Activated CD8-positive, alpha-beta T cell treated with anti-CD3 and anti-CD28 coated beads for 36 hours (primary cell): ENCODE measurements at regions of chr21 and their contacts with region 1.

Region 1: DNA sequence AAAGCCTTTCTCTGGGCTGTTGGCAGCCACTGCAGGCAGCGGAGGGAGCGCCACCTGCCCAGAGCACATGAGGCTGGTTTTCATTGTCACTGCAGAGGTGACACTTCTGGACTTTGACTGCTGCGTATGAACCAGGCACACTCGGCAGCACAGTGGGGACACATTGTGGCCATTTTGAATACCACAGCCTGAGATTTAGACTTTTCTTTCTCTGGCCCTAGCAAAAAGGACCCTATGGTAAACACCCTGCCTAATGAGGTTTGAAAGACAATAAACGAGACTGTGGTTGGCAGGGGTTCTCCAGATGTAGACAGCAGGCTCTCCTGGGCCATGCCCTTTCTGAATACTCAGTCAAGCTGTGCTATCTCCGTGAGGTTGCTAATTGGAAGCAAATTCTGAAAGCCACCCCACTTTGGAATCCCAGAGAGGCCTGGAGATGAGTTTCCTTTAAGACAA is 12.0 kb upstream of the KCNE2 start:
- DNase-seq: peak; percentile 46
- ATAC-seq: peak; percentile 84
- H3K4me3 Mint-ChIP-seq: no peak overlapping the region
- H3K27ac Mint-ChIP-seq: no peak overlapping the region
- H3K4me1 Mint-ChIP-seq: peaks cover 9% of the 10 kb centered on the region
- H3K27me3 Mint-ChIP-seq: peaks cover 10% of the 10 kb centered on the region
- CTCF ChIP-seq: peak; percentile 57

Region 2: GRCh38 chr21:33915368-33916199 is 436.2 kb before region 1 on chr21 and contains the start of gene ATP5PO:
- CTCF ChIA-PET with region 1: interaction called, 10 read pairs
- POLR2A ChIA-PET with region 1: no interaction called
- intact Hi-C with region 1: no loop called
- DNase-seq: peak; percentile 98
- ATAC-seq: peak; percentile 100
- H3K4me3 Mint-ChIP-seq: peak within 1 kb of the TSS; percentile 94
- H3K27ac Mint-ChIP-seq: peak within 1 kb of the TSS; percentile 98
- H3K4me1 Mint-ChIP-seq: peaks cover 29% of the 10 kb centered on the region
- H3K27me3 Mint-ChIP-seq: no peaks in the 10 kb centered on the region
- CTCF ChIP-seq: no peak
- total RNA-seq, gene ATP5PO: 234 to 241 TPM

Region 3: GRCh38 chr21:34202553-34203372 is 149.1 kb before region 1 on chr21:
- CTCF ChIA-PET with region 1: interaction called, 10 read pairs
- POLR2A ChIA-PET with region 1: no interaction called
- intact Hi-C with region 1: no loop called
- DNase-seq: no peak
- ATAC-seq: no peak
- H3K4me3 Mint-ChIP-seq: peak overlapping the region; percentile 67
- H3K27ac Mint-ChIP-seq: peak overlapping the region; percentile 17
- H3K4me1 Mint-ChIP-seq: peaks cover 49% of the 10 kb centered on the region
- H3K27me3 Mint-ChIP-seq: no peaks in the 10 kb centered on the region
- CTCF ChIP-seq: no peak

Region 4: DNA sequence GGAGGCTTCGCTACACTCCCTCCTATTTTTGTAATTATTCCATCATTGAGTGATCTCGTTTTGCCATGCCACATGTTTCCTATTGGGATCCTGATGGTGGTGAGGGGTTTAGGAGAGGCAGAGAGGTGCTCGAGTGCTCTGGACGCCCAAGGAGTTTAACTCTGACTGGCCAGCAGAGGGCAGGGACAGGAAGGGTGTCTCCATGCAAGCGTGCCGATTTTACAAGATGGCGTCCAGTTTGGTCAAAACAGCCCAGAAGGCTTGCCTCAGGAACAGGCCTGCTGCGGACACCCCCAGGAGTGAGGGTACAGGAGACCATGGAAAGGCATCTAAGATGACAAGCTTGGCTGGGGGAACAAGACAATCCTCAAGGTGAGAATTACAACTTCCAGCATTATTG is 21.8 kb before region 1 on chr21:
- CTCF ChIA-PET with region 1: interaction called, 38 read pairs
- POLR2A ChIA-PET with region 1: no interaction called
- intact Hi-C with region 1: no loop called
- DNase-seq: no peak
- ATAC-seq: no peak
- H3K4me3 Mint-ChIP-seq: no peak overlapping the region
- H3K27ac Mint-ChIP-seq: no peak overlapping the region
- H3K4me1 Mint-ChIP-seq: no peaks in the 10 kb centered on the region
- H3K27me3 Mint-ChIP-seq: no peaks in the 10 kb centered on the region
- CTCF ChIP-seq: no peak

Region 5: DNA sequence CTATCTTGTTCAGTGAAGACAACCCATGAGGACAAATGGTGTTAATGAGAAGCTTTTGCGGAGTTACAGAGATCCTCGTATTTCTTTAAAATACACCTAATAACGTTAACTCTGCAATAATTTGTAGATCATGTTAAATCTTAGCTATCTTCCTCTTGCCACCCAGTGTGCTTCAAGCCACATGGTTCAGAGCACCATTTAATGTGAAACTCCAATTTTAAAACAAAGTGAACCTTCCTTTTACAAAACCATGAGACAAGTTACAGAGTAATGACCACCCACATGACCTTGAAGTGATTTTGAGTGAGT is 10.3 kb after region 1 on chr21:
- CTCF ChIA-PET with region 1: interaction called, 27 read pairs
- POLR2A ChIA-PET with region 1: no interaction called
- intact Hi-C with region 1: no loop called
- DNase-seq: no peak
- ATAC-seq: peak; percentile 29
- H3K4me3 Mint-ChIP-seq: no peak overlapping the region
- H3K27ac Mint-ChIP-seq: no peak overlapping the region
- H3K4me1 Mint-ChIP-seq: peaks cover 3% of the 10 kb centered on the region
- H3K27me3 Mint-ChIP-seq: peaks cover 5% of the 10 kb centered on the region
- CTCF ChIP-seq: peak; percentile 53